Left colon (tissue), 2 donors: ENCODE measurements at regions of chr11 and their contacts with region 1.

Region 1: GRCh38 chr11:65506770-65507505 is 8.1 kb downstream of the MALAT1 start:
- DNase-seq: peak; percentile 55
- ATAC-seq: peak; percentile 20

Region 2: GRCh38 chr11:65391007-65391406 is 115.9 kb before region 1 on chr11:
- intact Hi-C with region 1: no loop called
- DNase-seq: no peak
- ATAC-seq: no peak

Region 3: GRCh38 chr11:65471410-65471762 is 35.6 kb before region 1 on chr11:
- intact Hi-C with region 1: loop called in 1 of 2 experiments (anchors 5 kb)
- DNase-seq: peak; percentile 77 to 82
- ATAC-seq: peak; percentile 56